ENCODE measurements at regions of chrX and their contacts with region 1.

Region 1: GRCh38 chrX:115650916-115651315 is 89.9 kb downstream of the PLS3 start:
- DNase-seq: no peak
- H3K4me3 ChIP-seq: no peak overlapping the region
- H3K27ac ChIP-seq: peak overlapping the region in 2 of 4 donors; percentile 5 to 31
- H3K4me1 ChIP-seq: peaks cover 0 to 17% (median 12%) of the 10 kb centered on the region in 4 donors
- H3K27me3 ChIP-seq: no peaks in the 10 kb centered on the region
- CTCF ChIP-seq: peak; percentile 55 to 62 (median 58)
- EP300 ChIP-seq: no peak
- POLR2A ChIP-seq: no peak

Region 2: GRCh38 chrX:115284877-115285276 is 366.0 kb before region 1 on chrX:
- intact Hi-C with region 1: no loop called
- DNase-seq: no peak
- H3K4me3 ChIP-seq: no peak overlapping the region
- H3K27ac ChIP-seq: no peak overlapping the region
- H3K4me1 ChIP-seq: no peaks in the 10 kb centered on the region
- H3K27me3 ChIP-seq: peaks cover 0 to 15% (median 0%) of the 10 kb centered on the region in 4 donors
- CTCF ChIP-seq: no peak
- EP300 ChIP-seq: no peak
- POLR2A ChIP-seq: no peak

Region 3: DNA sequence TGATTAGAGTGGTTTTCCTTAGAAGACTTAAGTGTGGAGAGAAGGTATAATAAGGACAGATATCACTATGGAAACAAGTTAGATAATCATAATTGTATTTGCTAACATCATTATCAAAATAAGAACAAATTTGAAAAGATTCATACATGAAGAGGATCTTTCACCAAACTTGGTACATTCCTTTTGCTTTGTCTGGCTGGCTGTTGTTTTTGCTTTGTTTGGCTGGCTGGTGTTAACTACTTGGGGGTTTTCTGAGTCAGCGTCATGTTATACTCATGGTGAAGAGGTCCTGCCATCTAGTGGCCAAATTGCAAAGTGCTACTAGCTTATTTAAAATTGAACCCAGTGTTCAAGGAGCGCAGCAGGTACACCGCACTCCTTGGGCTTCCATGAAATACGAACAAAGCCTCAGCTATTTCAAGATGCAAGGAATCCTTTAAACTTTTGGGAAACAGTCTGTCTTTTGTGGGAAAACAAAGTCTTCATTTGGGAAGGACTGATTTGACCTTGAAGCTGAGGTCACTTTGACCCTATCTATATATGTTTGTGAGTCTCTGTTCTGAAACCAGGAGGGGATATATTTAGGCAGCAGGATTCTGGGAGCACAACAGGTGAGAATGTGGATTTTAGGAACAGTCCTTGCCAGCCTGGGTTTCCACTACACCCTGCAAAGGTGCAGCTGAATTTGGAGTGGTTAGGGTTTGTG is 39.7 kb after region 1 on chrX:
- intact Hi-C with region 1: loop called (anchors 5 kb)
- DNase-seq: no peak
- H3K4me3 ChIP-seq: peak overlapping the region in 2 of 4 donors; percentile 7 to 12
- H3K27ac ChIP-seq: peak overlapping the region; percentile 45 to 63 (median 47)
- H3K4me1 ChIP-seq: peaks cover 0 to 11% (median 7%) of the 10 kb centered on the region in 4 donors
- H3K27me3 ChIP-seq: no peaks in the 10 kb centered on the region
- CTCF ChIP-seq: peak; percentile 77 to 85 (median 77)
- EP300 ChIP-seq: no peak
- POLR2A ChIP-seq: no peak

Measured in esophagus muscularis mucosa (tissue), 4 donors.